ENCODE measurements at regions of chr17 and their contacts with region 1.

Region 1: DNA sequence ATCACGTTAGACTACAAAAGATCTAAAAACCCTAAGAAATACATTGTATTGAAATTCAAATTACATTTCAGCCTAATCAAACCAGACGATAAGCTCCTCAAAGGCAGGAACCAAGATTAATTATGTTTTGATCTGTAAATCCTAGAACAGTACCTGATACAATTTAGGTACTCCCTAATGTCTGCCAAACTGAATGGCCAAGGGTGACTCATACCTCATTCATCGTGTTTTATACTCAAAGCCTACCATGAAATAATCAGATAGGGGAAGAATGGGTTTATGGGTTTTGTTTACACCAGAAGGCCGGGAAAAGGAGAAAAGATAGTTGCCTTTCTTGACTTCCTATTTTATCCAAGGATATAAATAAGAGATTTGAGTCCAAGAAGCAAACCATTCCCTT is 19.3 kb downstream of the MMD start:
- DNase-seq: no peak
- H3K4me3 ChIP-seq: no peak overlapping the region
- H3K27ac ChIP-seq: no peak overlapping the region
- H3K4me1 ChIP-seq: no peaks in the 10 kb centered on the region
- H3K27me3 ChIP-seq: no peaks in the 10 kb centered on the region
- CTCF ChIP-seq: no peak
- POLR2A ChIP-seq: no peak

Region 2: GRCh38 chr17:55348749-55349354 is 53.5 kb before region 1 on chr17:
- intact Hi-C with region 1: loop called (anchors 10 kb)
- DNase-seq: no peak
- H3K4me3 ChIP-seq: no peak overlapping the region
- H3K27ac ChIP-seq: no peak overlapping the region
- H3K4me1 ChIP-seq: peaks cover 0 to 11% (median 0%) of the 10 kb centered on the region in 3 donors
- H3K27me3 ChIP-seq: no peaks in the 10 kb centered on the region
- CTCF ChIP-seq: peak; percentile 33 to 87 (median 80)
- POLR2A ChIP-seq: no peak

Measured in esophagus squamous epithelium (tissue), 5 donors.